Posterior cingulate gyrus (tissue), 11 donors: ENCODE measurements at regions of chr2 and their contacts with region 1.

Region 1: GRCh38 chr2:210617732-210618330 is 61.4 kb downstream of the CPS1 start:
- DNase-seq: peak in 3 of 10 donors; percentile 12 to 27 (median 26)

Region 2: GRCh38 chr2:210445116-210445707 is 172.6 kb before region 1 on chr2:
- intact Hi-C with region 1: loop called (anchors 10 kb)
- DNase-seq: no peak

Region 3: GRCh38 chr2:211157856-211158463 is 540.1 kb after region 1 on chr2:
- intact Hi-C with region 1: loop called (anchors 1 kb)
- DNase-seq: peak in 9 of 10 donors; percentile 40 to 91 (median 81)